WTC11 (cell line): ENCODE measurements at regions of chr2 and their contacts with region 1.

Region 1: GRCh38 chr2:228048838-228049490 is 132.5 kb downstream of the SPHKAP start:
- DNase-seq: peak; percentile 35
- ATAC-seq: peak; percentile 100
- H3K4me3 Mint-ChIP-seq: no peak overlapping the region
- H3K27ac Mint-ChIP-seq: no peak overlapping the region
- H3K4me1 Mint-ChIP-seq: peaks cover 10% of the 10 kb centered on the region
- H3K27me3 Mint-ChIP-seq: no peaks in the 10 kb centered on the region
- CTCF ChIP-seq: peak; percentile 42; the same call in 1 of the 2 replicates

Region 2: GRCh38 chr2:227789803-227790202 is 259.2 kb before region 1 on chr2:
- CTCF ChIA-PET with region 1: no interaction called
- POLR2A ChIA-PET with region 1: no interaction called
- DNase-seq: no peak
- ATAC-seq: no peak
- H3K4me3 Mint-ChIP-seq: no peak overlapping the region
- H3K27ac Mint-ChIP-seq: no peak overlapping the region
- H3K4me1 Mint-ChIP-seq: no peaks in the 10 kb centered on the region
- H3K27me3 Mint-ChIP-seq: no peaks in the 10 kb centered on the region
- CTCF ChIP-seq: no peak

Region 3: DNA sequence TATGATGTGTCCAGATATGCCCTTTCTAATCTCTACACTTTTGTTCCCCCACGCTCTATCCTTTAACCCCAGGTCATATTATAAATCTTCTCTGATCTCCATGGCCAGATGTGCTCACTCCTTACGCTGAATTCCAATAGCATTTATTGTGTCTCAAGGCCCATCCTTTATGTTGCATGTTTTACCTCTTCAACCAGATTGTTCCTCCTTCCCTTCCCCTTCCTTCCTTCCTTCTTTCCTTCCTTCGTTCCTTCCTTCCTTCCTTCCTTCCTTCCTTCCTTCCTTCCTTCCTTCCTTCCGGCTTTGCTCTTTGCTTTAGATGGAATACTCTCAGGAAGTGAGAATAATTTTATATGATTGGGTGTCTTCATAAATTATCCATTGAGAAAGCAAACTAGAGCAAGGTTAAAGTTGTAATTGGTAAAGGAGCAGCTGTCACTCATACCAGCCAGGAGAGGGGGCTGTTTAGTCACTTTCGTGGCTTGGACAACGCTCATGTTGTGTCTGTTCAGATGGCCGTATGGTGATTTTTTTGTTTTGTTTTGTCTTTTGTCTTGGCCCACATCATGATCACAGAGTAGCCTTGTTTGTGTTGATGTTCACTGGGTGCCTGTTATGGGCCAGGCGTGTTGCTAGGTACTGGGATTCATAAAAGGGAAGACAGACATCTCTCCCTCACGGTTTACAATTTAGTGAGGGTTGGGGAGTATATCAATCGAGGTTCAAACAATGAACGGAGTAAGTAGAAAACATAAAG is 109.5 kb before region 1 on chr2:
- CTCF ChIA-PET with region 1: interaction called, 12 read pairs
- POLR2A ChIA-PET with region 1: no interaction called
- DNase-seq: peak; percentile 34
- ATAC-seq: peak; percentile 94
- H3K4me3 Mint-ChIP-seq: no peak overlapping the region
- H3K27ac Mint-ChIP-seq: no peak overlapping the region
- H3K4me1 Mint-ChIP-seq: peaks cover 11% of the 10 kb centered on the region
- H3K27me3 Mint-ChIP-seq: no peaks in the 10 kb centered on the region; the same call in 1 of the 2 replicates
- CTCF ChIP-seq: peak; percentile 51

Region 4: GRCh38 chr2:228016402-228016801 is 32.6 kb before region 1 on chr2:
- CTCF ChIA-PET with region 1: no interaction called
- POLR2A ChIA-PET with region 1: no interaction called
- DNase-seq: peak; percentile 16
- ATAC-seq: peak; percentile 97
- H3K4me3 Mint-ChIP-seq: no peak overlapping the region
- H3K27ac Mint-ChIP-seq: peak overlapping the region; percentile 49; the same call in 1 of the 2 replicates
- H3K4me1 Mint-ChIP-seq: peaks cover 19% of the 10 kb centered on the region
- H3K27me3 Mint-ChIP-seq: no peaks in the 10 kb centered on the region
- CTCF ChIP-seq: no peak